Tibial artery (tissue), 4 donors: ENCODE measurements at regions of chr19 and their contacts with region 1.

Region 1: DNA sequence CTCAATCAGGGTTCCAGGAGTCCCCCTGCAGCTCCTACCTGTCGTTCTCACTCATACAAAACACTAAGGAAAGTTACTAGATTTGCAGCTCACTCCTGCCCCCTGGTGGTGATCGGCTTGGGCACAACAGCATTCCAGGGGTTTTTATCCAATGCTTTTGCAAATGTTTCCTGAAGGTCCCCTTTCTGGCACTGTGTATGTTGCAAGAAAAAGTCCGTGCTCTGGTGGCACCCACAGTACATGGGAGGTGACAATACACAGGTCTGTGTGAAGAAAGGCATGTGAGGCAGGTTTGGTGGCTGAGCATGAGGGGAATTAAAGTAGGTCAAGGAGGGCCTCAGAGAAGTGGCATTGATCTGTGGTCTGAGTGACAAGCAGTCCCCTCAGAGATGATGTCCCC is 8.6 kb upstream of the TYK2 start:
- DNase-seq: peak; percentile 90 to 91
- H3K4me3 ChIP-seq: no peak overlapping the region
- H3K27ac ChIP-seq: no peak overlapping the region
- H3K4me1 ChIP-seq: peaks cover 0 to 5% (median 0%) of the 10 kb centered on the region in 4 donors
- H3K27me3 ChIP-seq: peaks cover 0 to 8% of the 10 kb centered on the region in 2 donors
- CTCF ChIP-seq: peak; percentile 86 to 87

Region 2: GRCh38 chr19:10269333-10270179 is 119.4 kb before region 1 on chr19:
- intact Hi-C with region 1: loop called (anchors 2 kb)
- DNase-seq: peak; percentile 84 to 89
- H3K4me3 ChIP-seq: peak overlapping the region; percentile 43 to 47
- H3K27ac ChIP-seq: peak overlapping the region; percentile 53 to 61
- H3K4me1 ChIP-seq: peaks cover 0 to 20% (median 18%) of the 10 kb centered on the region in 4 donors
- H3K27me3 ChIP-seq: peaks cover 0 to 42% of the 10 kb centered on the region in 2 donors
- CTCF ChIP-seq: peak; percentile 93

Region 3: GRCh38 chr19:10339977-10340376 is 49.0 kb before region 1 on chr19:
- intact Hi-C with region 1: no loop called
- DNase-seq: no peak
- H3K4me3 ChIP-seq: no peak overlapping the region
- H3K27ac ChIP-seq: no peak overlapping the region
- H3K4me1 ChIP-seq: peaks cover 0 to 10% (median 4%) of the 10 kb centered on the region in 4 donors
- H3K27me3 ChIP-seq: no peaks in the 10 kb centered on the region
- CTCF ChIP-seq: no peak